ENCODE measurements at regions of chr22 and their contacts with region 1.

Region 1: GRCh38 chr22:21641789-21642583 is at the start of gene SDF2L1:
- DNase-seq: peak; percentile 99
- H3K4me3 Mint-ChIP-seq: peak within 1 kb of the TSS; percentile 71
- H3K27ac Mint-ChIP-seq: peak within 1 kb of the TSS; percentile 73
- H3K4me1 Mint-ChIP-seq: peaks cover 31% of the 10 kb centered on the region
- H3K27me3 Mint-ChIP-seq: no peaks in the 10 kb centered on the region
- total RNA-seq, gene SDF2L1: 61.4 to 62.1 TPM

Region 2: DNA sequence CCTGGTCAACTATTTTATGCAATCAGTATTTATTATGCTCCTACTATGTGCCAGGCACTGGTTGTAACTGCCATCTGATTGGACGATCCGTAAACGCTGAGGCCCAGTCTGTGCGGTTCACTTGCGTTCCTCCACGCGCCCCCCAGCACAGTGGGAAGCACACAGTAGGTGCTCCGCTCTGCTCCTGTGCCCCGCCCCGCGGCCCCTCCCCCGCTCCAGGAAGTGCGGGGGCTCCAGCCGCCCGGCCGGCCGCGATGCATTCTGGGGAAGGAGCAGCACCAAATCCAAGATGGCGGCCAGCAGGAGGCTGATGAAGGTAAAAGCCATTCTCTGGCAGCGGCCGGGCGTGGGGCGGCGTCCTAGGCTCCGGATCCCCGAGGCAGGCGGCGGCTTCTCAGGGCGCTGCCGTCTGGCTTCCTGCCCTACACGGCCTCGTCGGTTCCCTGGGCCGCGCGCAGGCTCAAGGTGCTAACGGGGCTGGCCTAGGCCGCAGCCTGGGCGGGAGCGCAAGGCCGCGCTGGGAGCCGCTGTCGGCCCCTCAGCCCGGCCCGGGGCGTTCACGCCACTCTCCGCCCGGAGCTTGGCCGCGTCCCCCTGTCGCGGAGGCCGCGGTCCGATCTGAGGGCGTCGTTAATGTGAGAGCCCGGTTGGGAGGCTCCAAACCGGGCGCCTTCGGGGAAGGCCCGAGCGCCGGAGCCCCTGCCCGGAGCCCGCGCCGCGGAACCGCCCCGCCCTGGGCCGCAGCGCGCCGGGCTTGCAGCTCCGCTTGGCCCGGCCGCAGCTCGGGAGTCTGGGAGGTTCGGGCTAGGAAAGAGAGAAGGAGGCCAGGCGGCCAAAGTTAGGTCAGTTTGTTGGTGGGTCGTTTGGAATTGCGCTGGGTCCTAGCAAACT is 74.3 kb before region 1 on chr22 and contains the start of gene UBE2L3:
- CTCF ChIA-PET with region 1: interaction called, 9 read pairs
- POLR2A ChIA-PET with region 1: interaction called, 19 read pairs
- DNase-seq: peak; percentile 88
- H3K4me3 Mint-ChIP-seq: peak within 1 kb of the TSS; percentile 92
- H3K27ac Mint-ChIP-seq: peak within 1 kb of the TSS; percentile 90
- H3K4me1 Mint-ChIP-seq: peaks cover 45% of the 10 kb centered on the region
- H3K27me3 Mint-ChIP-seq: peaks cover 2% of the 10 kb centered on the region
- total RNA-seq, gene UBE2L3: 54.3 to 57.4 TPM

Region 3: DNA sequence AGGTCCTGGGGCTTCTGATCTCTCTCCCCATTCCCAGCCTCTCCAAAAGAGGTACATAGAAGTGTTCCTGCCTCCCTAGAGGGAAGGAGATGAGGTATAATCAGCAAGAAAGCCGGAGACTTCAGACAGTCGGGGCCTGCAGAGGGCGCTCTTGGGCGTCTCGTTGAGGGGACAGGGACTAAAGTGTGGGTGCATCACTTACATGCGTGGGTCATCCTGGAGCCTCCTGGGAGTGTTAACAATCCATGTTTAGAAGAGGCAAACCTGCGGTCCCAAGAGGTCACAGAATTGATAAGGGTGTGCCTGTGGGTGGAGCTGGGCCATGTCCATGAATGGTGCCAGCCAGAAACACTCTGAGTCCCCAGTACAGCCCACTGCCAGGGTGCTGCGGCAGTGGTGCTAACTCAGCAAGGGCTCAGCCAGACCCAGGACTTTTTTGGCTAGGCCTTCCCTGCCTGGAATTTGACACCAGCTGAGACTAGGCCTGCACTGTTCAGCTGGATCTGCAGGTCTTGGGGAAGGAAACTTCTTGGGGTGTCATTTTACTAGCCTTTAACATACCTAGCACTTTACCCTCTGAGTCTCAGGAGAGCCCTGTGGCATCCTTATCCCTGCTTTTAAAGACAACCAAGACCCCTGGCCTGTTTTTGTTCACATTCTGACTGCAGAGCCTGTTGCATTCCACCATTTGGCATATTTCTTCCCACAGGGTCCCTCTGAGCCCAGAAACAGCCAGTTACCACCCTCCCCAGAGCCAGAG is 17.7 kb before region 1 on chr22:
- CTCF ChIA-PET with region 1: interaction called, 289 read pairs
- POLR2A ChIA-PET with region 1: interaction called, 132 read pairs
- DNase-seq: peak; percentile 42
- H3K4me3 Mint-ChIP-seq: no peak overlapping the region
- H3K27ac Mint-ChIP-seq: peak overlapping the region; percentile 64
- H3K4me1 Mint-ChIP-seq: peaks cover 26% of the 10 kb centered on the region
- H3K27me3 Mint-ChIP-seq: no peaks in the 10 kb centered on the region

Region 4: DNA sequence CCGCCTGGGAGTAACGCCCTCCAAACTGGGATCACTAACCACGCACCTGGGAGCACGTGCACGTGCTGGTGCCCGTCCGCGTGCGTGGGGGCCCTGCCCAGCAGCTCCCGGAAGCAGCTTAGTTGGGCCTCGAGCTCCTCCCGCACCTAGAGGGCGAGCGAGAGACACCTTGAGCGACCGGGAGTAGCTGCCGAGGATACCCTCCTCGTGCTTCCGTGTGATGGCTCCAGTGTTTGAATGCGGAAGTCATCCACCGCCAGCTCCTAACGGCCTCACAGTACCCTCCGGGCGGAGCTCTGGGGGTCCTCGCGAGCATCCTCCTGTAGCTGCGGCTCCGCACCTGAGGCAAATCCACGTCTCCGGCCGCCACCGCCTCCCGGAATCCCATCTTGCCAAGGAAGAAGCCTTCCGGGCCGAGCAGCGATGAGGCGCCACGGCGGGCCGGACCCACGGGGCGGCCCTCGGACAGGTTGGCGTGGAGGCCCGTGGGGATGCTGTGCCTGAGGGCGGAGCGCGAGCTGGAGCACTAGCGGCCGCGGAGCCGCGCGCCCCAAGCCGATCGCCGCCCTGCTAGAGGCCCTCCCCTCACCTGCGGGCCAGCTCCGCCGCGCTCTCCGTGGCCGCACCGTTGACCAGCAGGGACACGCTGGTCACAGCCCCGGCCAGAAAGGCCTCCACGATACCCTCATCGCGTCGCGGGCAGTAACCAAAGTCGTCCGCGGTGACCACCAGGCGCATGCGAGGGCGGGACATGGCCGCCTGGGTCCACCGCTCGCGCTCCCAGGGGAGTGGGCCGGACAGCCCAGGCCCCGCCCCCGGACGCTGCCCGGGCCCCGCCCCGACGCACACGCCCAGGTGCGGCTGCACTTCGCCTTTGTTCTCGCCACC is 12.5 kb before region 1 on chr22 and contains the start of gene YDJC:
- CTCF ChIA-PET with region 1: interaction called, 289 read pairs
- POLR2A ChIA-PET with region 1: interaction called, 132 read pairs
- DNase-seq: peak; percentile 95
- H3K4me3 Mint-ChIP-seq: peak within 1 kb of the TSS; percentile 87
- H3K27ac Mint-ChIP-seq: peak within 1 kb of the TSS; percentile 88
- H3K4me1 Mint-ChIP-seq: peaks cover 46% of the 10 kb centered on the region
- H3K27me3 Mint-ChIP-seq: no peaks in the 10 kb centered on the region
- total RNA-seq, gene YDJC: 37.1 to 38.0 TPM

Region 5: GRCh38 chr22:21652010-21652546 is 10.1 kb after region 1 on chr22:
- CTCF ChIA-PET with region 1: interaction called, 39 read pairs
- POLR2A ChIA-PET with region 1: interaction called, 92 read pairs
- DNase-seq: peak; percentile 92
- H3K4me3 Mint-ChIP-seq: peak overlapping the region; percentile 81
- H3K27ac Mint-ChIP-seq: peak overlapping the region; percentile 84
- H3K4me1 Mint-ChIP-seq: peaks cover 35% of the 10 kb centered on the region
- H3K27me3 Mint-ChIP-seq: no peaks in the 10 kb centered on the region

Region 6: GRCh38 chr22:21657361-21658032 is 15.5 kb after region 1 on chr22:
- CTCF ChIA-PET with region 1: interaction called, 39 read pairs
- POLR2A ChIA-PET with region 1: interaction called, 92 read pairs
- DNase-seq: peak; percentile 85
- H3K4me3 Mint-ChIP-seq: peak overlapping the region; percentile 87
- H3K27ac Mint-ChIP-seq: peak overlapping the region; percentile 82
- H3K4me1 Mint-ChIP-seq: peaks cover 32% of the 10 kb centered on the region
- H3K27me3 Mint-ChIP-seq: no peaks in the 10 kb centered on the region

Region 7: GRCh38 chr22:21666786-21667185 is 24.8 kb after region 1 on chr22:
- CTCF ChIA-PET with region 1: interaction called, 16 read pairs
- POLR2A ChIA-PET with region 1: interaction called, 12 read pairs
- DNase-seq: no peak
- H3K4me3 Mint-ChIP-seq: peak overlapping the region; percentile 92
- H3K27ac Mint-ChIP-seq: peak overlapping the region; percentile 99
- H3K4me1 Mint-ChIP-seq: peaks cover 42% of the 10 kb centered on the region
- H3K27me3 Mint-ChIP-seq: no peaks in the 10 kb centered on the region

Measured in activated CD4-positive, alpha-beta memory T cell treated with anti-CD3 and anti-CD28 coated beads, Interleukin-2, amount 10 ng/mL, durations not matched to agents 7 days and 5 days (primary cell).